SK-N-SH (cell line): ENCODE measurements at regions of chr14 and their contacts with region 1.

Region 1: DNA sequence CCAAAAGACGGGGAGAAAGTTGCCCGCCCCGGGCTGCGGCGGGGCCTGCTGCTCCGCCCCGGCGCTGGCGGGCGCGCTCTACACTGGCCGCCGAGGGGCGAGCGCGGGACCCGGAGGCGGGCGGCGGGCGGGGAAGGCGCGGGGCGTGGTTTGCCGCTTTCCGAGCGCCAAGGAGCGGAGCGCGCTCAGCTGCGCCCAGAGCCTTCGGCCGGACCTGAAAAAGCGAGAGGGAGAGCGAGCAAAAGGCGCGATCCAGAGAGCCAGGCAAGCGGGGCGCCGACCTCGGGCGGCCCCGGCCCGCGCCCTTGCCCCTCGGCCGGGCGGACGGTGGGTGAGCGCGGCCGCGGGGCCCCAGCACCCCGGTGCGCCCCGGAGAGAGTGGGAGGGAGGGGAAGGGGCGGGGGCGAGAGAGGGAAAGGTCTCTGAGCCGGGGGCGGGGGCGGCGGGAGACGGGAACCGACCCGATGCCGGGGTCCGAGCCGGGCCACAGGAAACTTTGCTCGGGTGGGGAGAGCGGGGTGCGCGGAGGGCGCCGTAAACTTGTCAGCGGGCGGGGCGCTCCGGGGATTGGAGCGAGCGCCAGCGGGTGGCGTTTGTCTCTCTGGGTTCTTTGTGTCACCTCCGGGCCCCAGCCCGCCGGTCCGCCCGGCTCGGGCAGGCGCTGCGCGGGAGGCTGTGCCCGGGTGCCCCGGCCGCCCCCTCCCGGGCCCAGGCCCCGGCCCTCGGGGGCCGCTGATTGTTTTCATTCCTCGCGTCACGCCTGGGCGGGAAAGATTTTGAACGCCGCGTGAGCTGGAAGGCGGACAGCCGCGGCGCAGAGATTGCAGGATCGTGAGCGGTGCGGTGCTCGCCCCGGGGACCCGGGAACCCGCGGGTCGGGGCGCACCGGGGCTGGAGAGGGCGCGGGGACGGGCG is at the start of gene SYNE2:
- DNase-seq: peak; percentile 93
- H3K4me3 ChIP-seq: peak within 1 kb of the TSS; percentile 80 to 83
- H3K27ac ChIP-seq: peak within 1 kb of the TSS; percentile 67 to 80; a peak in 3 of 4 replicates
- H3K4me1 ChIP-seq: peaks cover 4 to 22% of the 10 kb centered on the region in 2 experiments; a peak in 3 of 4 replicates
- H3K27me3 ChIP-seq: no peaks in the 10 kb centered on the region
- CTCF ChIP-seq: 0 out of 2 replicates have a peak, but pooled peaks have one; percentile 20
- EP300 ChIP-seq: no peak
- RAD21 ChIP-seq: no peak
- polyA plus RNA-seq, gene SYNE2: 6.5 and 7.1 TPM in 2 replicates

Region 2: GRCh38 chr14:63840981-63841380 is 12.1 kb before region 1 on chr14:
- CTCF ChIA-PET with region 1: interaction called, 13 read pairs
- POLR2A ChIA-PET with region 1: no interaction called
- DNase-seq: no peak
- H3K4me3 ChIP-seq: no peak overlapping the region
- H3K27ac ChIP-seq: no peak overlapping the region
- H3K4me1 ChIP-seq: no peaks in the 10 kb centered on the region; a peak in 1 of 4 replicates
- H3K27me3 ChIP-seq: no peaks in the 10 kb centered on the region
- CTCF ChIP-seq: no peak; the same call in 1 of the 2 replicates
- EP300 ChIP-seq: no peak
- RAD21 ChIP-seq: no peak